ENCODE measurements at regions of chr18 and their contacts with region 1.

Region 1: GRCh38 chr18:35386600-35387351 is 9.6 kb upstream of the ZNF396 start:
- DNase-seq: peak; percentile 82
- ATAC-seq: peak; percentile 90
- H3K4me3 ChIP-seq: no peak overlapping the region
- H3K27ac ChIP-seq: no peak overlapping the region
- H3K4me1 ChIP-seq: no peaks in the 10 kb centered on the region; the same call in 1 of the 2 replicates
- H3K27me3 ChIP-seq: peaks cover 5% of the 10 kb centered on the region
- CTCF ChIP-seq: peak; percentile 89
- POLR2A ChIP-seq: no peak
- RAD21 ChIP-seq: peak; percentile 74

Region 2: GRCh38 chr18:35371412-35372195 is 15.2 kb before region 1 on chr18:
- CTCF ChIA-PET with region 1: interaction called, 19 read pairs
- POLR2A ChIA-PET with region 1: no interaction called
- dilution Hi-C with region 1: no loop called
- in situ Hi-C with region 1: no loop called
- intact Hi-C with region 1: no loop called
- DNase-seq: peak; percentile 79
- ATAC-seq: peak; percentile 68
- H3K4me3 ChIP-seq: no peak overlapping the region
- H3K27ac ChIP-seq: no peak overlapping the region
- H3K4me1 ChIP-seq: peaks cover 2% of the 10 kb centered on the region
- H3K27me3 ChIP-seq: no peaks in the 10 kb centered on the region
- CTCF ChIP-seq: no peak
- POLR2A ChIP-seq: no peak
- RAD21 ChIP-seq: no peak

Region 3: GRCh38 chr18:35756506-35757117 is 369.8 kb after region 1 on chr18:
- CTCF ChIA-PET with region 1: no interaction called
- POLR2A ChIA-PET with region 1: no interaction called
- dilution Hi-C with region 1: no loop called
- in situ Hi-C with region 1: no loop called
- intact Hi-C with region 1: loop called (anchors 2 kb)
- DNase-seq: peak; percentile 59
- ATAC-seq: peak; percentile 84
- H3K4me3 ChIP-seq: no peak overlapping the region
- H3K27ac ChIP-seq: no peak overlapping the region
- H3K4me1 ChIP-seq: no peaks in the 10 kb centered on the region
- H3K27me3 ChIP-seq: peaks cover 32% of the 10 kb centered on the region
- CTCF ChIP-seq: peak; percentile 85
- POLR2A ChIP-seq: peak; percentile 35; the same call in 1 of the 2 replicates
- RAD21 ChIP-seq: peak; percentile 87

Region 4: GRCh38 chr18:35775887-35776286 is 389.1 kb after region 1 on chr18:
- CTCF ChIA-PET with region 1: no interaction called
- POLR2A ChIA-PET with region 1: no interaction called
- dilution Hi-C with region 1: no loop called
- in situ Hi-C with region 1: no loop called
- intact Hi-C with region 1: no loop called
- DNase-seq: peak; percentile 9
- ATAC-seq: no peak
- H3K4me3 ChIP-seq: no peak overlapping the region
- H3K27ac ChIP-seq: no peak overlapping the region
- H3K4me1 ChIP-seq: no peaks in the 10 kb centered on the region
- H3K27me3 ChIP-seq: no peaks in the 10 kb centered on the region
- CTCF ChIP-seq: no peak
- POLR2A ChIP-seq: no peak
- RAD21 ChIP-seq: no peak

Region 5: DNA sequence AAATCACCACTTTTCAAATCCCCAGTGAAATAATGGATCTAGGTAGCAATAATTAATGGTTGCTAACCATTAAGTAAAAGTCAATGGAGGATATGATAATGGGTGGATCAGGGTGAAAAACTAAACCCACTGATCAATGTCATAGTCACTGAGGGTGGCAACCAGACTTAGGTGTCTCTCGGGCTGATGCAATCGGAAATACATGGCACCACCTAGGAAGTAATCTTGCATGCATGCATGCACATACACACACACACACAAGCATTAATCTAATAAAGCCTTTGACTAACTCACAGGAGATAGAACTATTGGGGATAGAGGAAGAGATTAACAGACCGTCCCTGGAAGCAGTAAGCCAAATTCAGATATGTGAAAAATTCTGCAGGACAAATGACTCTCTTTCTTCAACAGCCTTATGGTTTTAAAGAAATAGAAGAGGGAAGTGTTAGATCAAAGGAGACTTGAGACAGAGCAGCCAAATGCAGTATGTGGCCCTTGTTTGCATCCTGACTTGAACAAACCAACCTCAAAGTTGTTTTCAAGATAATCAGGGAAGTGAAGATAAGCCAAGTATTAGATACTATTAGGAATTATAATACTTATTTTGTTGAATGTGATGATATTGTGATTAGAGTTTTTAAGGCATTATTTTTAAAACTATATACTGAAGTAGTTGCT is 399.7 kb after region 1 on chr18:
- CTCF ChIA-PET with region 1: no interaction called
- POLR2A ChIA-PET with region 1: no interaction called
- dilution Hi-C with region 1: no loop called
- in situ Hi-C with region 1: no loop called
- intact Hi-C with region 1: no loop called
- DNase-seq: no peak
- ATAC-seq: no peak
- H3K4me3 ChIP-seq: no peak overlapping the region
- H3K27ac ChIP-seq: no peak overlapping the region
- H3K4me1 ChIP-seq: no peaks in the 10 kb centered on the region
- H3K27me3 ChIP-seq: no peaks in the 10 kb centered on the region
- CTCF ChIP-seq: no peak
- POLR2A ChIP-seq: no peak
- RAD21 ChIP-seq: no peak

Region 6: GRCh38 chr18:35949903-35950627 is 563.3 kb after region 1 on chr18:
- CTCF ChIA-PET with region 1: interaction called, 5 read pairs
- POLR2A ChIA-PET with region 1: no interaction called
- dilution Hi-C with region 1: no loop called
- in situ Hi-C with region 1: loop called (anchors 25 kb)
- intact Hi-C with region 1: loop called (anchors 1 kb)
- DNase-seq: peak; percentile 59
- ATAC-seq: peak; percentile 97
- H3K4me3 ChIP-seq: peak overlapping the region; percentile 58
- H3K27ac ChIP-seq: no peak overlapping the region
- H3K4me1 ChIP-seq: peaks cover 1% of the 10 kb centered on the region; the same call in 1 of the 2 replicates
- H3K27me3 ChIP-seq: peaks cover 13% of the 10 kb centered on the region
- CTCF ChIP-seq: peak; percentile 72
- POLR2A ChIP-seq: no peak
- RAD21 ChIP-seq: peak; percentile 58

Measured in IMR-90 (cell line).